Colonic mucosa (tissue), 4 donors: ENCODE measurements at regions of chr9 and their contacts with region 1.

Region 1: GRCh38 chr9:109440797-109441287 is 57.3 kb downstream of the PTPN3 start:
- DNase-seq: peak; percentile 50
- H3K4me3 ChIP-seq: no peak overlapping the region
- H3K27ac ChIP-seq: no peak overlapping the region
- H3K4me1 ChIP-seq: no peaks in the 10 kb centered on the region
- H3K27me3 ChIP-seq: no peaks in the 10 kb centered on the region
- CTCF ChIP-seq: peak; percentile 80

Region 2: DNA sequence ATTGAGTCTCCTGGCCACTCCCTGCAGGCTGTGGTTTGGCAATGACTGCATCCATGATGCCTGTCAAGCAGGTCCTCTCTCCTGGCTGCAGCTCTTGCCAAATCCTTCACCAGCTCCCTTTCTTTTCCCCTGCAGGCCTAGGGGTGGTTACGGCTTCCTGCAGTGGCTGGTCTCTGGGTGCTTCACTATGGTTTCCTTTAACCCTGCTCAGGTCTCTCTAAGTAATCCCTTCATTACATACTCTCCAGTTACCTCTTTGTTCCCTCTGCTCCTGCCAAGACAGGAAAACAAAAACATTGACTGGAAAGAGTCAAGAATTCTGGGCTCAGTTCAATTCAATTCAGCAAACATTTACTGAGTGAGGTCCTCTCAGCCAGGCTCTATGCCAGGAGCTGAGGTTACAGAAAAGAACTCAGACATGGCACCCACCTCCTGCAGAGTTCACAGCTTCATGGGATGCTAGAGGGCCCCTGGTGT is 77.1 kb after region 1 on chr9:
- intact Hi-C with region 1: loop called (anchors 2 kb)
- DNase-seq: no peak
- H3K4me3 ChIP-seq: no peak overlapping the region
- H3K27ac ChIP-seq: no peak overlapping the region
- H3K4me1 ChIP-seq: no peaks in the 10 kb centered on the region
- H3K27me3 ChIP-seq: no peaks in the 10 kb centered on the region
- CTCF ChIP-seq: no peak